Heart right ventricle (tissue), 16 donors: ENCODE measurements at regions of chr9 and their contacts with region 1.

Region 1: DNA sequence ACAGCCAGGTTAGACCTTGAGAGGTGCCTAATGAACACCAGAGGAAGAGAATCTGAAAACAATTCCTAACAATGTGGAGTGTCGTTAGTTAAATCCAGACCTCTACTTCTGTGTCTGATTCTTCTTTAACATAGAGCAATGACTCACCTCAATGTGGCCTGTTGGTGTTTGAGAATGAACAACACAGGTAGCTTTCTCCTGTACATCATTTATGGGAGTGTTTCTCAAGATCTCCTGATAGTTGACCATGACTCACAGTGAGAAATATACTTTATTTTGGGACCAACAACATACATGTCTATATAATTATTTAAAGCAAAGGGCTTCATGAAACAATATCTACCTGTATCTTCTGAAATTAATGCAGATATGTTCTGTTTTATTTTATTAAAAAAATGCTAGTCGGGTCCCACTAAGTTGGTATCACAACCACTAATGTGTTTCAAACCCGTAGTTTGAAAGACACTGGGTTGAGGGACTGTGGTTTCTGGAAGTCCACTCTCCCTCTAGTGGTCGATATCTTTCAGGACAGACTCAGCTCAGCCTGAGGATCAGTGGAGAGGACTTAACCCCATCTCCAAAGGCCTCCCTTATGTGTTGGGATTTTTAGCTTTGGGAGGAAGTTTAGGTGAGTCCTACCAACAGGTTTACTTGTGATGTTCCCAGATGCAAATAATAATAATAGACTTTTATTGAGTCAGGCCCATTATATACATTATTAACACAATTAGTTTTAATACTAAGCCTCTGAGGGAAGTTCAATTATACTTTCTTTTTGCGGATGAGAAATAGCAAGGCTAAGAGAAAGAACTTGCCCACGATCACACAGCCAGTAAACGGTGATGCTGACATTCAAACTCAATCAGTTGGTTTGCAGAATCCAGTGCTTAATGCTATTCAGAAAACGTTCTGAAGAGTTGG is 70.0 kb upstream of the KLF9 start:
- DNase-seq: peak in 1 of 2 donors; percentile 67
- ATAC-seq: peak; percentile 57 to 86 (median 78)
- H3K4me3 ChIP-seq: no peak overlapping the region
- H3K27ac ChIP-seq: peak overlapping the region; percentile 26 to 80 (median 68)
- H3K4me1 ChIP-seq: peaks cover 19 to 82% (median 71%) of the 10 kb centered on the region in 9 donors
- H3K27me3 ChIP-seq: no peaks in the 10 kb centered on the region
- CTCF ChIP-seq: peak; percentile 56 to 87 (median 82)

Region 2: GRCh38 chr9:70352802-70353201 is 131.7 kb before region 1 on chr9:
- intact Hi-C with region 1: loop called in 6 of 10 experiments (anchors 2 to 10 kb)
- DNase-seq: no peak
- ATAC-seq: peak in 2 of 8 donors; percentile 36 to 57
- H3K4me3 ChIP-seq: no peak overlapping the region
- H3K27ac ChIP-seq: peak overlapping the region in 2 of 10 donors; percentile 3 to 16
- H3K4me1 ChIP-seq: peaks cover 0 to 33% (median 10%) of the 10 kb centered on the region in 9 donors
- H3K27me3 ChIP-seq: no peaks in the 10 kb centered on the region
- CTCF ChIP-seq: peak; percentile 48 to 89 (median 73)

Region 3: DNA sequence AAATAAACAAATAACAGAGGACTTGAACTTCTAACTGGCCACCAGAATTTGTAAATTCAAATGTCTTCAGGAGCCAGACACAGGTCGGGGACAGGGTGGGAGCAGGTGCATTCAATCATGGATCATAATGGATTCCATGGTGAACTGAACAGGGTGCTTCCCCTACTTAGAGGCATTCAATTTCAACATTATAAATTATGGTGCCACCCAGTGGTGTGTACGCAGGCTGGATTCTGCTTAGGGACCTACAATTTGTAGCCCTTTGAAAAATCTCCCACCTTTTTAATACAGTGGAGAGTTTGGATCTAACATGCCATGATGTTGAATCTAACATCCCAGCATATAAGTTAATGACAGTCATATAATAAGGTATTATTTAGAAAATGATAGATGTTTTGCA is 92.3 kb before region 1 on chr9:
- intact Hi-C with region 1: no loop called
- DNase-seq: no peak
- ATAC-seq: peak in 6 of 8 donors; percentile 28 to 53 (median 40)
- H3K4me3 ChIP-seq: no peak overlapping the region
- H3K27ac ChIP-seq: peak overlapping the region in 8 of 10 donors; percentile 7 to 66 (median 36)
- H3K4me1 ChIP-seq: peaks cover 36 to 100% (median 80%) of the 10 kb centered on the region in 9 donors
- H3K27me3 ChIP-seq: no peaks in the 10 kb centered on the region
- CTCF ChIP-seq: peak in 6 of 9 donors; percentile 19 to 55 (median 42)

Region 4: GRCh38 chr9:70419546-70420266 is 64.8 kb before region 1 on chr9:
- intact Hi-C with region 1: loop called in 9 of 10 experiments (anchors 1 to 5 kb)
- DNase-seq: peak; percentile 96 to 97
- ATAC-seq: peak; percentile 68 to 86 (median 74)
- H3K4me3 ChIP-seq: peak overlapping the region in 9 of 10 donors; percentile 45 to 71 (median 64)
- H3K27ac ChIP-seq: peak overlapping the region; percentile 95 to 100 (median 100)
- H3K4me1 ChIP-seq: peaks cover 22 to 74% (median 60%) of the 10 kb centered on the region in 9 donors
- H3K27me3 ChIP-seq: no peaks in the 10 kb centered on the region
- CTCF ChIP-seq: peak in 2 of 9 donors; percentile 34 to 36

Region 5: GRCh38 chr9:70438341-70438928 is 46.0 kb before region 1 on chr9:
- intact Hi-C with region 1: loop called in 2 of 10 experiments (anchors 5 kb)
- DNase-seq: peak; percentile 34 to 73
- ATAC-seq: peak; percentile 58 to 97 (median 92)
- H3K4me3 ChIP-seq: no peak overlapping the region
- H3K27ac ChIP-seq: peak overlapping the region; percentile 55 to 87 (median 71)
- H3K4me1 ChIP-seq: peaks cover 0 to 45% (median 31%) of the 10 kb centered on the region in 9 donors
- H3K27me3 ChIP-seq: no peaks in the 10 kb centered on the region
- CTCF ChIP-seq: no peak

Region 6: DNA sequence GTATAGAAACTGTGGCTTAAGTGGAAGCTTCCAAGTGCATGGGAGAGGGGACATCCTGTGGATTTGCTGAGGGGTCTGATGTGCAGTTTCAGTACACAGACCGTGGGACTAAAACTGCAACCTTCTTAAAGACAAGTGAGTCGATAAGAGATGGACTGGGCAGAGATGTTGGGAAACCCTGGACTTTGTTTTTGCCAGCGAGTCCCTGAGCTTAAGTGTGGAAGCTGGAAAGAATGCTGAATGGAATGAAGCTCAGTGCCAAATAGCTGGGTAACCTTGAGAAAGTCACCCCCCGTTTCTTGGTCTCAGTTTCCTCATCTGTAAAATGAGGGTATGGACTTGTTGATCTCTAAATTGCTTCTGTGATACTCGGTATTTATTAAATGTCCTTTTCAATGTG is 32.7 kb before region 1 on chr9:
- intact Hi-C with region 1: no loop called
- DNase-seq: no peak
- ATAC-seq: peak in 1 of 8 donors; percentile 34
- H3K4me3 ChIP-seq: no peak overlapping the region
- H3K27ac ChIP-seq: no peak overlapping the region
- H3K4me1 ChIP-seq: peaks cover 0 to 10% (median 5%) of the 10 kb centered on the region in 9 donors
- H3K27me3 ChIP-seq: no peaks in the 10 kb centered on the region
- CTCF ChIP-seq: no peak

Region 7: DNA sequence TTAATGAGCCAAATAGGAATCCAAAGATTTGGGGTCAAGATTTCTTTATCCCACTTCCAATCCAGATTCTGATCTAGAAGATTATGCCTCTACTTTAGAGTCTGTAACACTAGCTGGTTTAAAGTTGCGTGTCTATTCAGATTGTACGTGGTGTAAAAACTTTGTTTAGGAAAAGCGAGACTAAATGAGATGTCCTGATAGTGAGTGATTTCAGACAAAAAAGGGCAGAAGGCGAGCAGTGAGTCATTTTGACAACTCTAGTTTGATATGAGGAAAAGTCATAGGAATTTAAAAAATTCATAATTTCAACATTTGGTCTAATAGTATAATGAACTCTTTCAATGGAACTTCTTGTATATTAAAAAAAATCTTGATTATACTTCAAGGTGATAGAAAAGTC is 49.6 kb after region 1 on chr9:
- intact Hi-C with region 1: no loop called
- DNase-seq: no peak
- ATAC-seq: no peak
- H3K4me3 ChIP-seq: no peak overlapping the region
- H3K27ac ChIP-seq: no peak overlapping the region
- H3K4me1 ChIP-seq: peaks cover 0 to 4% (median 0%) of the 10 kb centered on the region in 9 donors
- H3K27me3 ChIP-seq: no peaks in the 10 kb centered on the region
- CTCF ChIP-seq: no peak